GM12878 (cell line): ENCODE measurements at regions of chr12 and their contacts with region 1.

Region 1: DNA sequence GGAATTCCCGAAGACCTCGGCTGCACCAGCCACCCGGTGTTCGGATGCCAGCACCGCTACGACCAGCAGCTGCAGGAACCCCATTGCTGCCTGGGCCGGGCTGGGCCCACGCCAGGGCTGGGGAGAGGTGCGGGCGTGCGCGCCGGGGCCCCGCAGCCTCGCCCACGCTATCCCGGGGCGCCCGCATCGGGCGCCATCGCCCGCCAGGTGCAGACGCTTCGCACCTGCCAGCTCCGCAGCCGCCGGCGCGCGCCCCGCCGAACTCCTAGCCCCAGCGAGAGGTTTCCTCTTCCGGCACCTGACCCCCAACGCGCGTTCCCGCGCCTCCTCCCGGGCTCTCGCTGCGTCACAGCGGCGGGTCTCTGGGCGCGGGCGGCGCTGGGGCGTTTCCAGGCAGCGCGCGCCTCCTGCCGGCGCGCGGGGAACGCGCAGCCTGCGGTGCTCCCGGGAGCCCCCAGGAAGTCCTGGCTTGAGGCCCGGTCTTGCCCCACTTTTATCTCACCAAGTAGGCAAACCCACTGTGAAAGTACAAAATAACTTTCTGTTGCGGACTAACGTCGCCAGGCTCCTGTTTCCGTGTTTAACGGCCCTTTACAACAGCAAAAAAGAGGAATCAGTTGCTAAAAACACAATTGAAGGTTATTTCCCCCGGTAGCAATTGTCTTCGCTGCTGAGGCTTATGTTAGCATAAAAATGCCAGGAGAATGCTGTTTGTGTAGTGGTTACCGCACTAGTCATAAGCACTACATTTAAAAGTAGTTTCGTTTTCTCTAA is at the start of gene TM7SF3:
- DNase-seq: peak; percentile 81
- ATAC-seq: peak; percentile 80
- H3K4me3 ChIP-seq: peak within 1 kb of the TSS; percentile 78
- H3K27ac ChIP-seq: peak within 1 kb of the TSS; percentile 94
- H3K4me1 ChIP-seq: peaks cover 16% of the 10 kb centered on the region
- H3K27me3 ChIP-seq: no peaks in the 10 kb centered on the region
- CTCF ChIP-seq: peak; percentile 85 to 99 (median 99)
- EP300 ChIP-seq: no peak
- POLR2A ChIP-seq: peak; percentile 81
- RAD21 ChIP-seq: peak; percentile 78
- polyA plus RNA-seq, gene TM7SF3: 31.4 to 34.1 TPM

Region 2: GRCh38 chr12:26732005-26732908 is 282.0 kb before region 1 on chr12:
- CTCF ChIA-PET with region 1: interaction called, 3 read pairs
- POLR2A ChIA-PET with region 1: no interaction called
- RAD21 ChIA-PET with region 1: no interaction called
- SMC1A ChIA-PET with region 1: interaction called, 3 read pairs
- in situ Hi-C with region 1: no loop called
- intact Hi-C with region 1: loop called (anchors 5 kb)
- DNase-seq: peak; percentile 84
- ATAC-seq: peak; percentile 59
- H3K4me3 ChIP-seq: peak overlapping the region; percentile 13; the same call in 1 of the 2 replicates
- H3K27ac ChIP-seq: peak overlapping the region; percentile 97
- H3K4me1 ChIP-seq: peaks cover 65% of the 10 kb centered on the region
- H3K27me3 ChIP-seq: no peaks in the 10 kb centered on the region
- CTCF ChIP-seq: no peak
- EP300 ChIP-seq: peak; percentile 69 to 89
- POLR2A ChIP-seq: no peak
- RAD21 ChIP-seq: peak; percentile 15; the same call in 1 of the 2 replicates

Region 3: DNA sequence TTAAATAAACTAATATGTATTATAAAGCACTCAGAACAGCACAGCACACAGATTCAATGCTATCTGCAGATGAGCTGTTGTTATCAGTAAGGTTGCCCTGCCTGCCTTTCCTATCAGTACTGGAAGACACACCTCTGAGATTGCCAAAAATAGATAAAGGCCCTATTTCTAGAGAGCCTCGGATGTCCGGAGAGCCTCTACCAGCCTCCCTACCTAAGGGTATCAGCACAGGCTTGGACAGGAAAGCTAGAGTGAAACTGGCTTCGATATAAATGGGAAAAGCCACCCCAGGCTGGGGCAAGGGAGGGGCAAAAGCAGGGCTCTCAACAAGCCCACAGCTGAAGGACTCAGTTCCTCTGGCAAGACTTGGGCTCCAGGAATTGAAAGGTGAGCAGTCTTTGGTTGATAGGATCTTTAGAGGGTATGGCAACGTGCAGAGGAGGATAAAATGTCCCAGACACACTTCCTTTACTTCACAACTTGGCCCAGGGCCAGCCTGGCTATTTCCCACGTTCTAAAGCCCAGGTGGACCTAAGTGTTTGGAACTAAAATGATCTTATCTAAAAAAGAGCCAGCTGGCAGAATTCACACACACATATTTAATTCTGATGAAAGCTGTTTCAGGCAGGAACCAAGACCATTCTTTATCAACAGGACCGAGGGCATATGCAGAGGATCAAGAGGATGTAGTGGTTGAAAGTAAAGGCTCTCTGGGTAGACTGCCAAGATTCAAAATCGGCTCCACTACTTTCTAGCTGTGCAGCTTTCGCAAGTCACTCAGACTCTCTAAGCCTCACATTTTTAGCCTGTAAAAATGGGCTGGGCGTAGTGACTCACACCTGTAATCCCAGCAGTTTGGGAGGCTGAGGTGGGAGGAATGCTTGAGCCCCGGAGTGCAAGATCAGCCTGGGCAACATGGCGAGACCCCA is 143.5 kb before region 1 on chr12:
- CTCF ChIA-PET with region 1: interaction called, 3 read pairs
- POLR2A ChIA-PET with region 1: interaction called, 3 read pairs
- RAD21 ChIA-PET with region 1: interaction called, 12 read pairs
- SMC1A ChIA-PET with region 1: interaction called, 3 read pairs
- in situ Hi-C with region 1: no loop called
- intact Hi-C with region 1: no loop called
- DNase-seq: peak; percentile 35
- ATAC-seq: peak; percentile 33
- H3K4me3 ChIP-seq: no peak overlapping the region
- H3K27ac ChIP-seq: no peak overlapping the region; the same call in 1 of the 2 replicates
- H3K4me1 ChIP-seq: peaks cover 48% of the 10 kb centered on the region
- H3K27me3 ChIP-seq: no peaks in the 10 kb centered on the region
- CTCF ChIP-seq: no peak
- EP300 ChIP-seq: no peak
- POLR2A ChIP-seq: no peak
- RAD21 ChIP-seq: no peak

Region 4: GRCh38 chr12:26937875-26938700 is 76.2 kb before region 1 on chr12 and contains the starts of genes FGFR1OP2 and INTS13:
- CTCF ChIA-PET with region 1: interaction called, 6 read pairs
- POLR2A ChIA-PET with region 1: interaction called, 9 read pairs
- RAD21 ChIA-PET with region 1: interaction called, 11 read pairs
- SMC1A ChIA-PET with region 1: interaction called, 31 read pairs
- in situ Hi-C with region 1: no loop called
- intact Hi-C with region 1: loop called (anchors 2 kb)
- DNase-seq: peak; percentile 95
- ATAC-seq: peak; percentile 87
- H3K4me3 ChIP-seq: peak within 1 kb of the TSS; percentile 99
- H3K27ac ChIP-seq: peak within 1 kb of the TSS; percentile 94
- H3K4me1 ChIP-seq: peaks cover 5% of the 10 kb centered on the region
- H3K27me3 ChIP-seq: no peaks in the 10 kb centered on the region
- CTCF ChIP-seq: no peak
- EP300 ChIP-seq: peak in 1 of 2 experiments; percentile 27; a peak in 1 of 4 replicates
- POLR2A ChIP-seq: peak; percentile 97
- RAD21 ChIP-seq: no peak
- polyA plus RNA-seq, gene FGFR1OP2: 29.0 to 32.2 TPM
- polyA plus RNA-seq, gene INTS13: 43.4 to 65.4 TPM

Region 5: DNA sequence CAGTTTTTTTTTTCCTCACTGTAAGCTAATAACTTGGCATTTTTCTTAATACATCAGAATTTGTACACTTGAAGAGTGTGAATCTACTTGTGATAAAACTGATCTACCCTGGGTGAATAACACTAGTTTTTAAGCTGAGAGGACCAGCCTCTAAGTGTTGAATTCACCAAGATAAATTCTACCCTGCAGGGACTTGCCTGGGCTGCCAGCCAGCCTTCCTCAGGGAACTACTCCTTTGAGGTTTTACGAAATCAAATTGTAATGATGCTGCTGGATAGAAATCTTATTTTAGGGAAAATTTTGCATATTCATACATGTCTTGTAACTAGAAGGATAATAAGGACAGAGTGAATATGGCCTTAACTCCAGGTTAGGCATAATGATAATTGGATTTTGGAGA is 10.0 kb after region 1 on chr12:
- CTCF ChIA-PET with region 1: interaction called, 13 read pairs
- POLR2A ChIA-PET with region 1: interaction called, 9 read pairs
- RAD21 ChIA-PET with region 1: interaction called, 33 read pairs
- SMC1A ChIA-PET with region 1: interaction called, 29 read pairs
- in situ Hi-C with region 1: no loop called
- intact Hi-C with region 1: no loop called
- DNase-seq: no peak
- ATAC-seq: no peak
- H3K4me3 ChIP-seq: peak overlapping the region; percentile 91; the same call in 1 of the 2 replicates
- H3K27ac ChIP-seq: no peak overlapping the region
- H3K4me1 ChIP-seq: peaks cover 4% of the 10 kb centered on the region; the same call in 1 of the 2 replicates
- H3K27me3 ChIP-seq: no peaks in the 10 kb centered on the region
- CTCF ChIP-seq: no peak
- EP300 ChIP-seq: no peak
- POLR2A ChIP-seq: no peak
- RAD21 ChIP-seq: no peak

Region 6: DNA sequence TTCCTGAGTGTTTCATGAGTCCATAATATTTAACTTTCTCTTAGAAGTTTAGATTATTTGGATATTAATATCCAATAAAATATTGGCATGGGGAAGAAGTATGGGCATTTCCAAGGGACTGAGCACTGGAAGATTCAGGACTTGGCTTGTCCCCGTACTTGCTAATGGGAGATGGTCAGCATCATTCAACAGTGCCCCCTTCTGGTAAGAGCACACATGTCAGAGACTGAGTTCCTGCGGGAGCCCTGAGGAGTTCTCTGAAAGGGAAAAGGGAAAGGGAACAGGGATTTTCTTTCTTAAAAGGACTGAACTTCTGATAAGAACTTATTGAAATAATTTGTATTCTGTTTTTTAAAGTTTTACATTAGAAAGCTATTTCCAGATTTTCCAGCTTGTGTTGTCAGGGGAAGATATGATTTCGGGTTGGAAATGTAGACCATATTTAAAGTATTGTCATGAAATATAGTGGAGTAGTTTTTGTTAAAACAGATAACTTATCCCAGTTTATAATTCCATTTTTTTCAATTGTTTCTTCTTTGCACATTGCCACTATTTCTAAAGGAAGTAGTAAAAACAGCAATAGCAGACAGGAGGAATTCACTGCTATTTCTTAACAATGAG is 127.9 kb after region 1 on chr12:
- CTCF ChIA-PET with region 1: interaction called, 39 read pairs
- POLR2A ChIA-PET with region 1: interaction called, 4 read pairs
- RAD21 ChIA-PET with region 1: interaction called, 26 read pairs
- SMC1A ChIA-PET with region 1: interaction called, 13 read pairs
- in situ Hi-C with region 1: no loop called
- intact Hi-C with region 1: loop called (anchors 1 kb)
- DNase-seq: no peak
- ATAC-seq: peak; percentile 80
- H3K4me3 ChIP-seq: no peak overlapping the region
- H3K27ac ChIP-seq: no peak overlapping the region
- H3K4me1 ChIP-seq: peaks cover 9% of the 10 kb centered on the region; the same call in 1 of the 2 replicates
- H3K27me3 ChIP-seq: no peaks in the 10 kb centered on the region
- CTCF ChIP-seq: peak; percentile 72 to 79 (median 76)
- EP300 ChIP-seq: no peak
- POLR2A ChIP-seq: no peak
- RAD21 ChIP-seq: peak; percentile 87

Region 7: DNA sequence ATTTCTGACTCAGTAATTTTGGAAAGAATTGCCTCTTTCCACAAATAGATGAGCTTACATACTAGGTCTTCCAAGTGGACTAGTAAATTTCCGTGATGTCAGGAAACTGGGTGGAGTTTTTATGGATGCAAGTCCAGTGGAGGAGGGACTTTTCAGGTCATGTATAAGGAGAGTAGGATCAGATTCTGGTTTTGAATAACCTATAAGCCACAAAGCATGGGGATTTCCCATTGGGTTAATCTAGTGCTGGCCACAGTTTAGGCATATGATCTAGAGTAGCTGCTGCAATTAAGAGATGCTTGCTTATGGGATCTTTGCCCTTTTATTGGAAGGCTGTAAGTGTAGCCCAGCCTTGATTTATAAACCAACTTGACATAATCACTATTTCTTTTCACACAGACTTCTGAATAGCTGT is 263.6 kb after region 1 on chr12:
- CTCF ChIA-PET with region 1: interaction called, 8 read pairs
- POLR2A ChIA-PET with region 1: no interaction called
- RAD21 ChIA-PET with region 1: interaction called, 5 read pairs
- SMC1A ChIA-PET with region 1: interaction called, 11 read pairs
- in situ Hi-C with region 1: no loop called
- intact Hi-C with region 1: no loop called
- DNase-seq: peak; percentile 73
- ATAC-seq: peak; percentile 91
- H3K4me3 ChIP-seq: no peak overlapping the region
- H3K27ac ChIP-seq: peak overlapping the region; percentile 61; the same call in 1 of the 2 replicates
- H3K4me1 ChIP-seq: peaks cover 22% of the 10 kb centered on the region
- H3K27me3 ChIP-seq: no peaks in the 10 kb centered on the region
- CTCF ChIP-seq: no peak
- EP300 ChIP-seq: peak; percentile 64 to 71; a peak in 3 of 4 replicates
- POLR2A ChIP-seq: no peak
- RAD21 ChIP-seq: no peak